PC-3 (cell line): ENCODE measurements at regions of chr10 and their contacts with region 1.

Region 1: GRCh38 chr10:119725828-119726675 is at the start of gene INPP5F:
- DNase-seq: peak; percentile 93
- ATAC-seq: peak; percentile 89
- H3K4me3 ChIP-seq: peak within 1 kb of the TSS; percentile 82
- H3K27ac ChIP-seq: peak within 1 kb of the TSS; percentile 68
- H3K4me1 ChIP-seq: peaks cover 24% of the 10 kb centered on the region
- H3K27me3 ChIP-seq: no peaks in the 10 kb centered on the region
- CTCF ChIP-seq: no peak
- total RNA-seq, gene INPP5F: 8.1 and 8.2 TPM in 2 replicates

Region 2: DNA sequence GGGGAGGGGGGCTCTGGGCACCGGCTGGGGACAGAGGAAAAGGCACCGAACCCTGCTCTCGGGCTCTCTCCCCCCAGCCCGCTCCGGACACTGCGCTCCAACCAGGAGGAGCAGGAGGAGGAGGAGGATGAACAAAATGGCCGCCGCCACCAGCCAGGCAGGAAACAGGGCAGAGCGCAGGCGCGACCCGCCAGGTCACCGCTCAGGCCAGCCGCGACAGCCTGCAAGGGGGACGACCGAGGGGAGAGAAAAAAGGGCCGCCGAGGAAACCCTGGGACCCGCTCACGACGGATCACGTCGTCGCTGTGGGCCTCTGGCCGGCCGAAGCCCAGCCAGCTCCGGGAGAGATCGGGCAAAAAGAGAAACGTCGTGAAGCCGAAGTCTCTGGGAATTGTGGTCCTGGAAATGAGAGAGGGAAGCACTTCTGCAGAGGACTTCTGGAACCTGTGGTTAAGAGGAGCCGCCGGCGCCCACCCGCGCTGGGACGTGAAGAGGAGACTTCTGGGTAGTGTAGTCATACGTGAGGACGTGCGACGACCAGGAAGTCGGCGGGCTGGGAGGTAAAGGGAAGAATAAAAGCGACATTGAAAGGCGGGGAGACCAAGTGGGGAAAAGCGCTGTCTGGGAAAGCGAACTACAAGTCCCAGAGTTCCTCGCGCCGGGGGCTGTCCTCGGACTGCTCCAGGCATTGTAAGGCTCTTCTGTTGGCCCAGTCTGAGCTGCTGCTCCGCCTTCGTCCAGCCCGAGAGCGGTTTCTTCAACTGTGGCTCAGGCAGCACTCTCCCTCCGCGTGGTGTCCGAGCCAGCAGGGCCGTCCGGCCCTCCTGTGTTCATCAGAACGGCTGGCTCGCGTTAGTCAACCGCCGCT is 129.3 kb before region 1 on chr10 and contains the start of gene TIAL1:
- CTCF ChIA-PET with region 1: no interaction called
- POLR2A ChIA-PET with region 1: interaction called, 3 read pairs
- intact Hi-C with region 1: loop called (anchors 5 kb)
- DNase-seq: peak; percentile 96
- ATAC-seq: peak; percentile 86
- H3K4me3 ChIP-seq: peak within 1 kb of the TSS; percentile 99
- H3K27ac ChIP-seq: peak within 1 kb of the TSS; percentile 99
- H3K4me1 ChIP-seq: peaks cover 34% of the 10 kb centered on the region
- H3K27me3 ChIP-seq: no peaks in the 10 kb centered on the region
- CTCF ChIP-seq: no peak
- total RNA-seq, gene TIAL1: 42.8 and 46.6 TPM in 2 replicates

Region 3: DNA sequence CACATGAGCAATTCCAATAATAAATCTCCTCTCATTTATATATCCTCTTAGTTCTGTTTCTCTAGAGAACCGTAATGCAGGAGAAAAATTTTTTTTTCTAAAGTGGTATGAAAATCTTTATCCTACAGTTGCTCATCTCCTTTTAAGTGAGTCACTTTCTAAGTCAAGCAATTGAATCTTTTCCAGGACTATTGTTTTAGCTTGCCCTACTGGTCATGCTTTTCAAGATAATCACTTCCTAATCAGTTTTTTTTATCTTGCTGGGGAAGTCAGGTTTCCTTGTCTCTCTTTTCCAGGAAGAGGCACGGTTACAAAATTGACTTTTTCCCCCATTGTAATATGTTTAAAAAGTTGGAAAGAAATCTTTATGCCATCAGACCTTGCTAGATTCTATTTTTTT is 43.8 kb after region 1 on chr10:
- CTCF ChIA-PET with region 1: no interaction called
- POLR2A ChIA-PET with region 1: no interaction called
- intact Hi-C with region 1: no loop called
- DNase-seq: peak; percentile 71
- ATAC-seq: peak; percentile 74
- H3K4me3 ChIP-seq: no peak overlapping the region
- H3K27ac ChIP-seq: peak overlapping the region; percentile 24
- H3K4me1 ChIP-seq: peaks cover 15% of the 10 kb centered on the region
- H3K27me3 ChIP-seq: no peaks in the 10 kb centered on the region
- CTCF ChIP-seq: no peak

Region 4: GRCh38 chr10:119803264-119803663 is 77.2 kb after region 1 on chr10:
- CTCF ChIA-PET with region 1: no interaction called
- POLR2A ChIA-PET with region 1: no interaction called
- intact Hi-C with region 1: no loop called
- DNase-seq: peak; percentile 13
- ATAC-seq: no peak
- H3K4me3 ChIP-seq: no peak overlapping the region
- H3K27ac ChIP-seq: no peak overlapping the region
- H3K4me1 ChIP-seq: no peaks in the 10 kb centered on the region
- H3K27me3 ChIP-seq: no peaks in the 10 kb centered on the region
- CTCF ChIP-seq: no peak